ENCODE measurements at regions of chr21 and their contacts with region 1.

Region 1: DNA sequence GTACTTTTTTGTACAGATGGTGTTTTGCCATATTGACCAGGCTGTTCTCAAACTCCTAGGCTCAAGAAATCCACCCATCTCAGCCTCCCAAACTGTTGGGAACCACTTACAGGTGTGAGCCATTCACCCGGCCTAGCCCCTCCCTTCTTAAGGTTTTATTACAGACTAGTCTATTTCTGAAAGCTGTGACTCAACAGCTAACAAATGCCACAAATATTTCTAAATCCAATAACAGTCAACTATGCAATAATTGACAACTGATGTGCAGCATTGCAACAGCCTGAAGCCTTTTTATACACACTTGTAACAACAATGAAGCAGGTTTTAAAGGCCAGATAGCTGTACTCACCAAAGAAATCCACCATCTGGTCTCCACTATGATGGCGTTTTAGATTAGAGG is 51.4 kb downstream of the GRIK1 start:
- DNase-seq: no peak
- H3K4me3 ChIP-seq: no peak overlapping the region
- H3K27ac ChIP-seq: no peak overlapping the region
- H3K4me1 ChIP-seq: no peaks in the 10 kb centered on the region
- H3K27me3 ChIP-seq: no peaks in the 10 kb centered on the region
- CTCF ChIP-seq: no peak
- POLR2A ChIP-seq: no peak

Region 2: DNA sequence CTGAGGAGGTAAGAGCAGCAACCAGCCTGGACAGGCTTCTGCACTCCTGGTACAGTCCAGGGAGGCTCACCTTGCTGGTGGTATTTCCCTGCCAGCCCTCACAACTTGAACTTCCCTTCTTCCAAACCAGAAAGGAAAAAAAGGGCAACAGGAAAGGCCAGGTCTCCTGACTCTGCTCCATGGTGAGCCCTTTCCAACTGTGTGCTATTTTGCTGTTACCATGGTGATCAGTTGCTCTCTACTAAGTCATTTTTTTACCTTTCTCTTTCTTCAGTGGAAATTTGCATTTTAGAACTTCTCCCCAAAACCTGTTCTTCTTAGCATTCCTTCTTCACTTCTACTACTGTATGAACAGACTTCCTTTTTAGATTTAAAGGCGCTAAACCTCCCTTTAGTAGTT is 113.0 kb before region 1 on chr21:
- intact Hi-C with region 1: no loop called
- DNase-seq: no peak
- H3K4me3 ChIP-seq: no peak overlapping the region
- H3K27ac ChIP-seq: no peak overlapping the region
- H3K4me1 ChIP-seq: no peaks in the 10 kb centered on the region
- H3K27me3 ChIP-seq: no peaks in the 10 kb centered on the region
- CTCF ChIP-seq: no peak
- POLR2A ChIP-seq: no peak

Region 3: GRCh38 chr21:29829564-29830275 is 58.7 kb before region 1 on chr21:
- intact Hi-C with region 1: loop called (anchors 10 kb)
- DNase-seq: no peak
- H3K4me3 ChIP-seq: no peak overlapping the region
- H3K27ac ChIP-seq: no peak overlapping the region
- H3K4me1 ChIP-seq: no peaks in the 10 kb centered on the region
- H3K27me3 ChIP-seq: no peaks in the 10 kb centered on the region
- CTCF ChIP-seq: no peak
- POLR2A ChIP-seq: no peak